CD8-positive, alpha-beta T cell (primary cell): ENCODE measurements at regions of chr13 and their contacts with region 1.

Region 1: DNA sequence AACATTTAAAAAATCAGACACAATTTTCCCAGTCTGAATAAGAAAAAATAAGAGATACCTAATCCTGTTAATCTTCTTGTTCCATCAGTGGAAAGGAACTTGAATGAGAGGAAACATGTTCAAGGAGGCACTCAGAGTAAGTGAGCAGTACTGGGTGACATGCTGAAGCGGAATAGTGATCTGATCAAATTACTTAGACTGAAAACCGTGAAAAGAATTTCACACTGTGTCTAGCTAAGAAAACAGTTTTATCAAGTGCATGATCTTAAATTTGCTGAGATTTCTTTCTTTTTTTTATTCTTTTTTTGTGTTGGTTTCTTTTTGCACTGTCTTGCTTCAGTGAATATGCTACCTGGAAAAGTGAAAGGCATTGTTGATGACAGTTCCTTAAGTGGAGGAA is 249.5 kb upstream of the SLC10A2 start:
- DNase-seq: no peak
- ATAC-seq: no peak
- H3K4me3 ChIP-seq: no peak overlapping the region
- H3K4me3 Mint-ChIP-seq: no peak overlapping the region
- H3K27ac ChIP-seq: no peak overlapping the region
- H3K27ac Mint-ChIP-seq: no peak overlapping the region
- H3K4me1 ChIP-seq: no peaks in the 10 kb centered on the region
- H3K4me1 Mint-ChIP-seq: no peaks in the 10 kb centered on the region
- H3K27me3 ChIP-seq: no peaks in the 10 kb centered on the region
- H3K27me3 Mint-ChIP-seq: no peaks in the 10 kb centered on the region
- CTCF ChIP-seq: no peak

Region 2: DNA sequence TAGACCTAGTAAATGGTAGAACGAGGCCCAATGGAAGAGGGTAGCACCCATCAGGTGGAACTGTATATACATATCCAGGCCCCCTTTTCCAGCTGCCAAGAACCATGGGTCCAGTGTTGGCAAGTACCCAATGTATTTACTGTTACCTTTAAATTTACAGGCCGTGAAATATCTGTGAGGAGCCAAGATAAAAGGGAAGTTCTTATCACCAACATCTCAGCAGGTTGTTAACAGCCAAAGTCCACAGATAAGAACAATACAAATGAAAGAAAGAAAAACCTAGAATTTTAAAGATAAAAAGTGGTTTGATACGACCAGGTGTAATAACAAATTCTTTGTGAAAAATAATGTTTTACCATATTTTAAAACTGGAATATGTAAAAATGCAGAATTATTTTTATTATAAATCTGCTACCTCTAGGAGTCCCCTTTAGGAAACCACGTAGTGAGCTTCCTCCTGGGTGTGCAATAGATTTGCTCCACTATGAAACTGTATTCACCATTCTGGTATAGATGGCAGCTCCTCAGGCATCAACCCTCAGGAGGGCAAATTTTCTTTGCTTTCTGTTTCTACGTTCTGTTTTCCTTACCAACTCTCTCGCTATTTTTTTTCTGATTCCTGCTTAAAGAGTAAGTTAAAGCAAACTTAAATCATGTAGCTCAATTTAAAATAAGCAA is 42.7 kb after region 1 on chr13:
- CTCF ChIA-PET with region 1: no interaction called
- POLR2A ChIA-PET with region 1: no interaction called
- intact Hi-C with region 1: loop called in 1 of 2 experiments (anchors 1 kb)
- DNase-seq: no peak
- ATAC-seq: no peak
- H3K4me3 ChIP-seq: no peak overlapping the region
- H3K4me3 Mint-ChIP-seq: no peak overlapping the region
- H3K27ac ChIP-seq: no peak overlapping the region
- H3K27ac Mint-ChIP-seq: no peak overlapping the region
- H3K4me1 ChIP-seq: no peaks in the 10 kb centered on the region
- H3K4me1 Mint-ChIP-seq: no peaks in the 10 kb centered on the region
- H3K27me3 ChIP-seq: no peaks in the 10 kb centered on the region
- H3K27me3 Mint-ChIP-seq: no peaks in the 10 kb centered on the region
- CTCF ChIP-seq: no peak